CD4-positive, alpha-beta memory T cell (primary cell): ENCODE measurements at regions of chr5 and their contacts with region 1.

Region 1: GRCh38 chr5:58886315-58887207 is 303.7 kb downstream of the RAB3C start:
- DNase-seq: peak; percentile 53 to 69 (median 67)
- H3K4me3 ChIP-seq: no peak overlapping the region
- H3K4me3 Mint-ChIP-seq: peak overlapping the region in 5 of 8 donors; percentile 4 to 65 (median 47)
- H3K27ac ChIP-seq: no peak overlapping the region
- H3K27ac Mint-ChIP-seq: peak overlapping the region in 6 of 7 donors; percentile 10 to 81 (median 78)
- H3K4me1 ChIP-seq: peaks cover 19% of the 10 kb centered on the region
- H3K4me1 Mint-ChIP-seq: peaks cover 15 to 33% (median 24%) of the 10 kb centered on the region in 4 donors
- H3K27me3 ChIP-seq: no peaks in the 10 kb centered on the region
- H3K27me3 Mint-ChIP-seq: peaks cover 3 to 4% of the 10 kb centered on the region in 2 donors

Region 2: GRCh38 chr5:58933891-58934628 is 47.5 kb after region 1 on chr5:
- CTCF ChIA-PET with region 1: interaction called, 3 read pairs
- POLR2A ChIA-PET with region 1: no interaction called
- intact Hi-C with region 1: loop called (anchors 2 kb)
- DNase-seq: peak; percentile 62 to 83 (median 66)
- H3K4me3 ChIP-seq: no peak overlapping the region
- H3K4me3 Mint-ChIP-seq: peak overlapping the region; percentile 2 to 74 (median 60)
- H3K27ac ChIP-seq: no peak overlapping the region
- H3K27ac Mint-ChIP-seq: peak overlapping the region; percentile 68 to 94 (median 88)
- H3K4me1 ChIP-seq: peaks cover 24% of the 10 kb centered on the region
- H3K4me1 Mint-ChIP-seq: peaks cover 16 to 33% (median 24%) of the 10 kb centered on the region in 4 donors
- H3K27me3 ChIP-seq: no peaks in the 10 kb centered on the region
- H3K27me3 Mint-ChIP-seq: peaks cover 0 to 2% of the 10 kb centered on the region in 2 donors

Region 3: GRCh38 chr5:59007460-59008063 is 121.0 kb after region 1 on chr5:
- CTCF ChIA-PET with region 1: interaction called, 43 read pairs
- POLR2A ChIA-PET with region 1: no interaction called
- intact Hi-C with region 1: loop called (anchors 1 kb)
- DNase-seq: peak in 4 of 5 donors; percentile 15 to 33 (median 23)
- H3K4me3 ChIP-seq: no peak overlapping the region
- H3K4me3 Mint-ChIP-seq: no peak overlapping the region
- H3K27ac ChIP-seq: no peak overlapping the region
- H3K27ac Mint-ChIP-seq: peak overlapping the region in 1 of 7 donors; percentile 38
- H3K4me1 ChIP-seq: peaks cover 34% of the 10 kb centered on the region
- H3K4me1 Mint-ChIP-seq: peaks cover 28 to 72% (median 44%) of the 10 kb centered on the region in 4 donors
- H3K27me3 ChIP-seq: no peaks in the 10 kb centered on the region
- H3K27me3 Mint-ChIP-seq: no peaks in the 10 kb centered on the region

Region 4: GRCh38 chr5:59188419-59189225 is 302.1 kb after region 1 on chr5:
- CTCF ChIA-PET with region 1: interaction called, 17 read pairs
- POLR2A ChIA-PET with region 1: no interaction called
- intact Hi-C with region 1: no loop called
- DNase-seq: peak; percentile 55 to 68 (median 66)
- H3K4me3 ChIP-seq: no peak overlapping the region
- H3K4me3 Mint-ChIP-seq: peak overlapping the region in 2 of 8 donors; percentile 23 to 58
- H3K27ac ChIP-seq: no peak overlapping the region
- H3K27ac Mint-ChIP-seq: no peak overlapping the region
- H3K4me1 ChIP-seq: peaks cover 5% of the 10 kb centered on the region
- H3K4me1 Mint-ChIP-seq: peaks cover 3 to 5% (median 4%) of the 10 kb centered on the region in 4 donors
- H3K27me3 ChIP-seq: no peaks in the 10 kb centered on the region
- H3K27me3 Mint-ChIP-seq: peaks cover 13 to 15% of the 10 kb centered on the region in 2 donors

Region 5: DNA sequence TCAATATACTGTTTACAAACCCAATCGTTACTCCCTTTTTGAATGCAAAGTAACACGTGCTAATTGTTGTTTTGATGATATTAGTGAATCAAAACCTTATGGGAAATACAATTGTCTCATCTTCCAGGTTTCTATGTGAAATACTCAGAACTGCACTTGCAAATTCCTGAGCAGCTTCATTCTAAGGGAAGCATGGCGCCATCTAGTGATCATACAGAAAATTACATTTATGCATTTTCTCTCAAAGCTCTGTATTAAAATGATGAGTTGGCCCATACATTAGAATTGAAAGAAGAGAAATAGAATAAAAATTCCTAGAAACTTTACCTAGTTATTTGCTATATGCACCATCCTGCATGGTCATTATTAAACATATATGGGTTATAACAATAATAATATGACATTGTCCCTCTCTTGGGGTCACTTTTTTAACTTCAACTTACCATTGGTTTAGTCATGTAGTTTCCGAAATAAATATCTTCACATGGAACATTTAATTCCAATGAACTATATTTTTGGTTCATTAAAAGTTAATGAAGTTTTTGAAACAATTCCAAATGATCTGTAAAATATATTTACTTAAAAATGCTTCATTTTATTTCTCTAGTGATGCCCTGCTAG is 787.0 kb after region 1 on chr5:
- CTCF ChIA-PET with region 1: interaction called, 3 read pairs
- POLR2A ChIA-PET with region 1: no interaction called
- intact Hi-C with region 1: loop called (anchors 5 kb)
- DNase-seq: peak in 4 of 5 donors; percentile 10 to 34 (median 21)
- H3K4me3 ChIP-seq: no peak overlapping the region
- H3K4me3 Mint-ChIP-seq: no peak overlapping the region
- H3K27ac ChIP-seq: no peak overlapping the region
- H3K27ac Mint-ChIP-seq: no peak overlapping the region
- H3K4me1 ChIP-seq: no peaks in the 10 kb centered on the region
- H3K4me1 Mint-ChIP-seq: peaks cover 0 to 2% (median under 1%) of the 10 kb centered on the region in 4 donors
- H3K27me3 ChIP-seq: no peaks in the 10 kb centered on the region
- H3K27me3 Mint-ChIP-seq: peaks cover 0 to 3% of the 10 kb centered on the region in 2 donors

Region 6: DNA sequence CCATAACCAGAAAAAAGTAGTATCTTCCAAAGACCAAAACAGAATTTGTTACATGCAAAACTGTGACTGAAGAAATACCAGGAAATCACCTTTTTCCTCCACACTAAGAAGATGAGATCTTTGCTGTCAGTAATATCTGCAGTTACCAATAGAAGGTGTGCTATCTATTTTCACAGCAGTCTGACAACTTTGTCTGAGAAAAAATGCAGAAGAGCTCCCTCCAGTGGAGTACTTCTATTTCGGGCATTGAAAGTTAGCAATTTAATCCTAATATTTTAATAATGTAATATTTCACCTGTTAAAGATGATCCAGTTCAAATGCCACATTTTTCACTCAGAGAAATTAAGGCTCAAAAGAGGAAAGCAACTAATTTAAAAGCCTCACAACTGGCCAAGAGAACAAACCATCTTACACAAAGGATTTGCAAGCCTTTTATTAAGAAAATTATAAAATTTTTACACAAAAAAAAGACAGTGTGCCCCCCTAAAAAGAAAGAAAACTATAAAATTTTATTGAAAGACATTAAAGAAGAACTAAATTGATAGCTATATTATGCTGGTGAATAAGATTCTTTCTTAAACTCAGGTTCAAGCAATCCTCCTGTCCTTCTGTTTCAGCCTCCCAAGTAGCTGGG is 1762.8 kb after region 1 on chr5:
- CTCF ChIA-PET with region 1: no interaction called
- POLR2A ChIA-PET with region 1: no interaction called
- intact Hi-C with region 1: no loop called
- DNase-seq: peak in 2 of 5 donors; percentile 5 to 10
- H3K4me3 ChIP-seq: no peak overlapping the region
- H3K4me3 Mint-ChIP-seq: no peak overlapping the region
- H3K27ac ChIP-seq: no peak overlapping the region
- H3K27ac Mint-ChIP-seq: no peak overlapping the region
- H3K4me1 ChIP-seq: no peaks in the 10 kb centered on the region
- H3K4me1 Mint-ChIP-seq: no peaks in the 10 kb centered on the region
- H3K27me3 ChIP-seq: no peaks in the 10 kb centered on the region
- H3K27me3 Mint-ChIP-seq: no peaks in the 10 kb centered on the region